ENCODE measurements at regions of chr12 and their contacts with region 1.

Region 1: DNA sequence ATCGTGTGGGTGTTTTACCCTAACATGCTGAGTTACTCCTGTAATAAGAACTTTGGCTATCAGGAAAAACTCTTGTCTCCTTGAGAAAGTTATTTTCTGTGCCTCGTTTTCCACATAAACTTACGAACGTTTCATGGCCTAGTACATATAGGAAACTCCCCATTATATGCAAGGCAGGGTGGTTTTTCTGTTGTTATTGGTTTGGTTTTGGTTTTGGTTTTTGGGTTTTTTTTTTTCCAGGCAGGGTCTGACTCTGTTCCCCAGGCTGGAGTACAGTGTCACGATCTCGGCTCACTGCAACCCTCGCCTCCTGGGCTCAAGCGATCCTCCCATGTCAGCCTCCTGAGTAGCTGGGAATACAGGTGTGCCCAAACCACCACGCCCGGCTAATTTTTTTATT is 5.5 kb downstream of the OR6C3 start:
- DNase-seq: no peak
- H3K4me3 ChIP-seq: no peak overlapping the region
- H3K27ac ChIP-seq: no peak overlapping the region
- H3K4me1 ChIP-seq: no peaks in the 10 kb centered on the region
- H3K27me3 ChIP-seq: no peaks in the 10 kb centered on the region
- CTCF ChIP-seq: no peak

Region 2: GRCh38 chr12:54917001-54917488 is 419.0 kb before region 1 on chr12:
- intact Hi-C with region 1: no loop called
- DNase-seq: no peak
- H3K4me3 ChIP-seq: no peak overlapping the region
- H3K27ac ChIP-seq: no peak overlapping the region
- H3K4me1 ChIP-seq: no peaks in the 10 kb centered on the region
- H3K27me3 ChIP-seq: peaks cover 10% of the 10 kb centered on the region
- CTCF ChIP-seq: no peak

Region 3: DNA sequence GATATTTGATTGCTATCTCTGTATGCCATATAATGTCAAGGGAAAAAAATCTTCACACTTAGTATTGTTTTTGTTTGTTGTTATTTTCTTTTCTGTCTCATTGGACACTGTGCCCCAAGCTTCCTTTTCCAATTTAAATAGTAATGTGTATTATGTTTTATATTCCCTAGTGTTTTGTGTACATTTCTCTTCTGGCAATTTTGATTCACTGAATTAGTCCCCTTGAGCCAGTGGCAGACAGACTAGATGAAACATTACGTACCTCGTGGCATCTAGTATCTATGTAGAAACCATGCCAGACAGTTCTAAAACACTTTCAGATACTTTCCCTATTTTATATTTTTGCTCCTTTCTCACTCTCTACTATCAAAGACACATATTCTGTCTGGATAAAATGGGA is 22.0 kb before region 1 on chr12 and contains the start of gene OR6C1:
- intact Hi-C with region 1: loop called (anchors 1 kb)
- DNase-seq: no peak
- H3K4me3 ChIP-seq: no peak within 1 kb of the TSS
- H3K27ac ChIP-seq: no peak within 1 kb of the TSS
- H3K4me1 ChIP-seq: no peaks in the 10 kb centered on the region
- H3K27me3 ChIP-seq: no peaks in the 10 kb centered on the region
- CTCF ChIP-seq: no peak
- total RNA-seq, gene OR6C1: not detected